Left colon (tissue), 2 donors: ENCODE measurements at regions of chr12 and their contacts with region 1.

Region 1: GRCh38 chr12:32755654-32756475 is at the start of gene YARS2:
- DNase-seq: peak; percentile 97 to 98
- ATAC-seq: peak; percentile 95
- total RNA-seq, gene YARS2: 13.4 to 14.9 TPM

Region 2: DNA sequence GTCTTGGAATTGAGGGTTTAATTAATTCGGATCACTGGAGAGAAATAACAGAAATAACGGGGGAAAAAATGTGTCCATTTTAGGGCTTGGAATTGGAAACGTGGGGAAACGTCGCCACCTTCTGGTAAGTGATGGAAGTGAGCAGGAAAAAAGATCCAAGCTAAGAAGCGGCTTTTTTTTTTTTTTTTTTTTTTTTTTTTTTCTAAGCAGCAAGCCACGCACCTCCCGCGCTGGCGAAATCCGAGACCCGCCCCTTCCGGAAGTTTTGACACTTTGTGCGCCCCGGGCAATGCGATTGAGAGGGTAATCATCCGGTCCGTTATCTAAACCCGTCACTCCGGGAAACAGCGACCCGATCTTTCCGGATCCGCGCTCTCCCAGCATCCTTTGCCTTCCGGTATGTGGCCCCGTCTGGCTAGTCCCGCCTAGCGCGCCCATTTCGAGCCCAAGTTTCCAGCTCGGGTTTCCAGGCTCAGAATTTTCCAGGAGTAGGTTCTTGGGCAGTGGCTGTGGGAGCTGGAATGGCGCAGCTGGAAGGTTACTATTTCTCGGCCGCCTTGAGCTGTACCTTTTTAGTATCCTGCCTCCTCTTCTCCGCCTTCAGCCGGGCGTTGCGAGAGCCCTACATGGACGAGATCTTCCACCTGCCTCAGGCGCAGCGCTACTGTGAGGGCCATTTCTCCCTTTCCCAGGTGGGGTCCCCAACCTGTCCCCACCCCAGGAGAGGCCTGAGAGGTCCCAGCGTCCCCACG is 1266.4 kb after region 1 on chr12 and contains the start of gene ALG10:
- intact Hi-C with region 1: loop called in 1 of 2 experiments (anchors 5 kb)
- DNase-seq: peak; percentile 95 to 97
- ATAC-seq: peak; percentile 100
- total RNA-seq, gene ALG10: 5.4 to 5.5 TPM